ENCODE measurements at regions of chr17 and their contacts with region 1.

Region 1: GRCh38 chr17:17836250-17836817 is 452 bp downstream of the SREBF1 start:
- DNase-seq: peak; percentile 98
- H3K4me3 Mint-ChIP-seq: peak overlapping the region; percentile 80
- H3K27ac Mint-ChIP-seq: peak overlapping the region; percentile 85
- H3K4me1 Mint-ChIP-seq: peaks cover 72% of the 10 kb centered on the region
- H3K27me3 Mint-ChIP-seq: no peaks in the 10 kb centered on the region

Region 2: DNA sequence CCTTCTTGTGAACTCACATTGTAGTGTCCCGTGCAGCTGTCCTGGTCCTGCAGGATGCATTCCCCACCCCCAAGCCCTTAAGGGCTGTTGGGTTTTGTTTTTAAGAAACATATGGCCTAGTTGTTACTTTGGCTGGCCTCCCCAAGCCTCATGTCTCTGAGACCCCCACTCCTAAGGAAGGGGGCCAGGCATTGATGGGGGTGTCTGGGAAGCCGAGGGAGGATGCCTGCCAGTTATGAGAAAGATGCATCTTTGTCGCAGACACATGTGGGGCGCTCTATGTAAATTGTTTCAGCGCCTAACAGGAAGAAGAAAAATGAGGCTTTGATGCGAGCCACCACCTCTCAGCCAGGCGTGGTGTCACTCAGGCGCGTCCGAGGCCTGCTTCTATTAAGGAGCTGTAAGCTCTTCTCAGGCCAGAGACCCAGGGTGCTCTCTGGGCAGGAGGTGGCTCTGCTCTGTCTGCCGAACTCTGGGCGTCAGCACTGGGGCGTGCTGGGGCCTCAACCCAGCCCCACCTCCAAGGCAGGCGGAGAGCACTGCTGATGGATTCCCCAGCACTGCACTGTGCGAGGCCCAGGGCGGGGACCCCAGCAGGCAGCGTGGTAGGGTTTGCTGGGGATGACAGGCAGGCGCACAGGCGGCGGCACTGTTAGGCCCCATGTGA is 70.1 kb before region 1 on chr17:
- CTCF ChIA-PET with region 1: no interaction called
- POLR2A ChIA-PET with region 1: no interaction called
- DNase-seq: no peak
- H3K4me3 Mint-ChIP-seq: no peak overlapping the region
- H3K27ac Mint-ChIP-seq: no peak overlapping the region
- H3K4me1 Mint-ChIP-seq: peaks cover 4% of the 10 kb centered on the region
- H3K27me3 Mint-ChIP-seq: no peaks in the 10 kb centered on the region

Region 3: GRCh38 chr17:17812211-17813057 is 23.9 kb before region 1 on chr17:
- CTCF ChIA-PET with region 1: interaction called, 6 read pairs
- POLR2A ChIA-PET with region 1: interaction called, 322 read pairs
- DNase-seq: peak; percentile 59
- H3K4me3 Mint-ChIP-seq: no peak overlapping the region
- H3K27ac Mint-ChIP-seq: no peak overlapping the region
- H3K4me1 Mint-ChIP-seq: peaks cover 21% of the 10 kb centered on the region
- H3K27me3 Mint-ChIP-seq: no peaks in the 10 kb centered on the region

Region 4: DNA sequence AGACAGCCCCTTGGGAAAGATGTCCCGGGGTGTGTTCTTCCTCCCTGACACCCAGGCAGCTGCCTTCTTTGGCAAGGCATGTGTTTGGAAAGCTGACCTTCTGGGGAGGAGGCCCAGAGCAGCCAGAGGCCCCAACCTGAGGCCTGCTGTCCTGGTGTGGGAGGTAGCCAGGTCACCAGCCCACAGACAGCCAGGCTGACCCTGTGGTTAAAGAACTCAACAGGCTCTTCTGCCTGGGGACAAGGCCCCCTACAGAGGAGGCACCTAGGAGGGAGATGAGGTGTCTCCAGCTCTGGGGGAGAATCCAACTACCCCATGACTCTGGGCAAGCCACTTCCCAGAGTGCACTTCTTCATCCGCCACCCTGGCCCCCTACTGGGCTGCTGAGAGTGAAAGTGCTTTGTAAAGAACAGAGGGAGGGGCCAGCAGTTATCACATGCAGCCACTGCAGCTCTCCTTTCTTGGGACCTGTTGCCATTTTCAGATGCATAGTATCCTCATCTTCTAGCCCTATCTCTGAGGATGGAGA is 13.6 kb after region 1 on chr17:
- CTCF ChIA-PET with region 1: interaction called, 23 read pairs
- POLR2A ChIA-PET with region 1: interaction called, 253 read pairs
- DNase-seq: peak; percentile 84
- H3K4me3 Mint-ChIP-seq: no peak overlapping the region
- H3K27ac Mint-ChIP-seq: peak overlapping the region; percentile 99
- H3K4me1 Mint-ChIP-seq: peaks cover 79% of the 10 kb centered on the region
- H3K27me3 Mint-ChIP-seq: no peaks in the 10 kb centered on the region

Region 5: DNA sequence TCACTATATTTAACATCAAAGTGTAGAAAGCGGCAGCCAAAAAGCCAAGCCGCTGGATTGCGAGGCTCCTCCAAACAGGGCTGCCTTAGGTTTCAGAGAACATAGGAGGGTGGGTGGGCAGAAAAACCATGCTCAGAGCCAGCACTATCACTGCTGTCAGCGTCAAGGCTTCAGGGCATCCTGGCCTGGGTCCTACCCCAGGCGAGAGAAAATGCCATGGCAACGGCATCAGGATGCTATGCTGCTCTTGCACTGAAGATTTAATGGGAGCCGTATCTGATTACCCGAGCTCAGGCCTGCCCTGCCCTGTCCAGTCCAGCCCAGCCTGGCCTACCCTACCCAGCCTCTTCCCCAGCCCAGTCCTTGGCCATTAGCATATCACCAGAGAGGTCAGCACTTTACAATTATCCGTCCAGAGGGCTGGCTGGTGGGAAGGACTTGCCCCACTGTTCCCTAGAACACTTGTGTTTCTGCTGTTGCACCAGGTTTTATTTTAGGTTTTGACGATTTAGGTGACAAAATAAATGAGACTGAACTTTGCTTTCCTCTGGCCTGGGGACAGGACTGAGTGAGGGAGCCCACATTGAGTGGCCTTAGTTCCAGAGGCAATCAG is 74.8 kb after region 1 on chr17:
- CTCF ChIA-PET with region 1: no interaction called
- POLR2A ChIA-PET with region 1: no interaction called
- DNase-seq: no peak
- H3K4me3 Mint-ChIP-seq: no peak overlapping the region
- H3K27ac Mint-ChIP-seq: no peak overlapping the region
- H3K4me1 Mint-ChIP-seq: peaks cover 11% of the 10 kb centered on the region
- H3K27me3 Mint-ChIP-seq: no peaks in the 10 kb centered on the region

Region 6: DNA sequence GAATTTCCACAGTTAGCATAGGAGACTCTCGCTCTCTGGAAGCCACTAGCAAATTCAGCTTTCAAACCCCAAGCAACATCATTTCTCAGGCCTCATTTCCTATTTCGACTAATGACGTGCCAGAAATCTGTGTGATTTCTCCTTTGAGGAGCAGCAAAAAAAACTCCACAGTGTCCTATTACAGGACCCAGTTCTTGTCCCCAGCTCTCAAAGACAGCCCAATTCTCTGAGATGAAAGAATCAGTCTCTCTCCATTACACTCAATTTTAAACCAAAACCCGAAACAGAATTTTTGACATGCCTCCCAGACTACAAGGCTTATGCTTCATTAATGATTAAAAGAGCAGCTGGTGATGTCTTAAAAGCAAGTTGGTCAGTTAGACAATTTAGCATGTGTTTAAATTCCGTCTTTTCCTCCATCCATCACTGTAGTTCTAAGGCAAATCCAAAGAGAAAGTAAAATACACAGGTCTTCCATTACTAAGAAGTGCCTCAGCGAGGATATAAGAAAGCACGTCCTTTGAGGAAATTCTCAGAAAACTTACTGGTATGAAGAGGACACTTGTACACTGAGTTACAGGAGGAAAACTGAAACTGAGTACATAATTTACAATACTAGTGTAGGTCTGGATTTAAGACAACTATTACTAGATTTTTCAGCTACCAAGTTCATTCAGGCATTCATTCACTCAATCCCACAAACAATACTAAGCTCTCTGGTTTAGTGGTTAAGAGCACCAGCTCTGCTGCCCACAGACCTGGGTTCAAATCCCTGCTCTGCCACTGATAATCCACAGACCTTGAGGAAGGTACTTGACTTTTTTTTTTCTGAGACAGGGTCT is 123.4 kb after region 1 on chr17:
- CTCF ChIA-PET with region 1: no interaction called
- POLR2A ChIA-PET with region 1: interaction called, 28 read pairs
- DNase-seq: peak; percentile 46
- H3K4me3 Mint-ChIP-seq: peak overlapping the region; percentile 76
- H3K27ac Mint-ChIP-seq: peak overlapping the region; percentile 98
- H3K4me1 Mint-ChIP-seq: peaks cover 66% of the 10 kb centered on the region
- H3K27me3 Mint-ChIP-seq: no peaks in the 10 kb centered on the region